Gastrocnemius medialis (tissue), 4 donors: ENCODE measurements at regions of chr22 and their contacts with region 1.

Region 1: DNA sequence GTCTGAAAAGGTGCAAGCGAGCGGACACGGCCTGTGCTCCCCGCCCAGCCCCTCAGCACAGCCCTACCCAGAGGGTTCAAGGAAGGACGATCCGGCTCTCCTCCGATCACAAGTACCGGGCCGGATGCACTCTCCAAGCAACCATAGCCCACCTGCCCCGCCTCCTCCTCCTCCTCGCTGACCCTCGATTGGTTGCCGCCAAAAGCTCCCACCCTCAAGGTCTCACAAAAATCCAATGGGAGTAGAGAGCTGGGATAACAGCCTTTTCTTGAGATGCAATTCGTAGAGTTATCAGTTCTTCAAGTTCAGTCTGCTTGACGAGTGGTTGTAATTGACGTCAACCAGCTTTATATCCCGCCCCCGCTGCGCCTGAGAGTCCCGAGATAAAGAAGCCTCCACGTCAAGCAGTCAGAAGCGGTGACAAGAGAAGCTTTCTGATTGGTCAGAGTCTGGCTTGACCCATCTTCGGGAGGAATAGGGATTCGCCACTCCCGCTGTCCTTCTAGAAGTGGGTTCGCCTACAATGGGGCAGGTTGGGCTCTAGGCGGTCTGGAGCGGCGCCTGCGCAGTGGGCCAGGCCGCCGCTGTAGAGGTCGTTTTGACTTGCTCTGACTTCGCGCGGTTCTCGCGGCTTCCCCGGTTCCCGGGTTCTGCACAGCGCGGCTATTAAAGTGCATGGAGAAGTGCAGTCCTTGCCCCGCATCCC is at the start of gene IFT27:
- DNase-seq: peak; percentile 100
- ATAC-seq: peak; percentile 99 to 100
- H3K4me3 ChIP-seq: peak within 1 kb of the TSS; percentile 73 to 97 (median 95)
- H3K27ac ChIP-seq: peak within 1 kb of the TSS; percentile 84 to 92 (median 88)
- H3K4me1 ChIP-seq: peaks cover 13 to 16% of the 10 kb centered on the region in 2 donors
- H3K27me3 ChIP-seq: no peaks in the 10 kb centered on the region
- CTCF ChIP-seq: no peak
- POLR2A ChIP-seq: peak; percentile 34 to 46
- total RNA-seq, gene IFT27: 2.4 to 8.3 (median 6.7) TPM

Region 2: GRCh38 chr22:36636916-36637315 is 139.2 kb before region 1 on chr22:
- in situ Hi-C with region 1: no loop called
- intact Hi-C with region 1: no loop called
- DNase-seq: no peak
- ATAC-seq: no peak
- H3K4me3 ChIP-seq: no peak overlapping the region
- H3K27ac ChIP-seq: no peak overlapping the region
- H3K4me1 ChIP-seq: no peaks in the 10 kb centered on the region
- H3K27me3 ChIP-seq: peaks cover 5 to 24% (median 14%) of the 10 kb centered on the region in 3 donors
- CTCF ChIP-seq: no peak
- POLR2A ChIP-seq: no peak

Region 3: GRCh38 chr22:36856121-36856791 is 80.1 kb after region 1 on chr22:
- in situ Hi-C with region 1: loop called in 1 of 4 experiments (anchors 10 kb)
- intact Hi-C with region 1: loop called (anchors 2 kb)
- DNase-seq: peak; percentile 79 to 81
- ATAC-seq: peak; percentile 89 to 96
- H3K4me3 ChIP-seq: peak overlapping the region in 1 of 4 donors; percentile 26
- H3K27ac ChIP-seq: no peak overlapping the region
- H3K4me1 ChIP-seq: peaks cover 8 to 24% of the 10 kb centered on the region in 2 donors
- H3K27me3 ChIP-seq: peaks cover 0 to under 1% (median 0%) of the 10 kb centered on the region in 3 donors
- CTCF ChIP-seq: peak; percentile 97 to 100 (median 99)
- POLR2A ChIP-seq: no peak

Region 4: GRCh38 chr22:36966851-36967540 is 190.9 kb after region 1 on chr22:
- in situ Hi-C with region 1: loop called in 3 of 4 experiments (anchors 10 to 25 kb)
- intact Hi-C with region 1: no loop called
- DNase-seq: no peak
- ATAC-seq: no peak
- H3K4me3 ChIP-seq: no peak overlapping the region
- H3K27ac ChIP-seq: no peak overlapping the region
- H3K4me1 ChIP-seq: no peaks in the 10 kb centered on the region
- H3K27me3 ChIP-seq: no peaks in the 10 kb centered on the region
- CTCF ChIP-seq: no peak
- POLR2A ChIP-seq: no peak